Dorsolateral prefrontal cortex (tissue), 120 donors: ENCODE measurements at regions of chr1 and their contacts with region 1.

Region 1: GRCh38 chr1:198465201-198466144 is 75.0 kb downstream of the ATP6V1G3 start:
- DNase-seq: no peak
- H3K4me3 ChIP-seq: no peak overlapping the region
- H3K27ac ChIP-seq: no peak overlapping the region
- H3K27me3 ChIP-seq: no peaks in the 10 kb centered on the region
- CTCF ChIP-seq: peak; percentile 36 to 87 (median 71)

Region 2: GRCh38 chr1:197614916-197615692 is 850.4 kb before region 1 on chr1:
- intact Hi-C with region 1: loop called in 1 of 2 experiments (anchors 10 kb)
- DNase-seq: peak in 2 of 10 donors; percentile 7 to 17
- H3K4me3 ChIP-seq: no peak overlapping the region
- H3K27ac ChIP-seq: no peak overlapping the region
- H3K27me3 ChIP-seq: no peaks in the 10 kb centered on the region
- CTCF ChIP-seq: peak in 55 of 56 donors; percentile 32 to 75 (median 54)

Region 3: DNA sequence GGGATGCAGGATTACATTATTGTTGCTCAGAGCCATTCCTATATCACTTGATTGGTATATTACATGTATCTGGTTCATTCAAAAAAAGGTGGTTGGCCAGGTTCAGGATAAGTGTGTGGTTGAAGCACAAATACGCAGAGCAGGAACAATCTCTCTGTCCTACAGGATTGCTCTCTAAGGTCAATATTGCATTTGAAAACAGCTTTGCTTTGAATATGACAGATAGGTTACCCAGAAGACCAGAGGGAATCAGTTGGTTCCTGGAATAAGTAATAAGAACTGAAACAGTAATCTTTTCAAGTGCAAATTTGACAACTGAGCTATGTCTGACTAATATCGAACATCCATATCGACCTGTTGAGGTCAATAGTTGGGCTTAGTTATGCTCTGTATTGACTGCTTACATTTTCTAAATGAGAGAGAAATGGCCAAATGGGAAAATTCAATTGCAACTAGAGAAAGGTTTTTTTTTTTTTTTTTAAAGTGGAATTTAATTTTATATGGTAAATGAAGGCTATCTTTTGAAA is 101.8 kb before region 1 on chr1:
- intact Hi-C with region 1: no loop called
- DNase-seq: no peak
- H3K4me3 ChIP-seq: no peak overlapping the region
- H3K27ac ChIP-seq: no peak overlapping the region
- H3K27me3 ChIP-seq: peaks cover 0 to 4% (median 0%) of the 10 kb centered on the region in 45 donors
- CTCF ChIP-seq: no peak

Region 4: DNA sequence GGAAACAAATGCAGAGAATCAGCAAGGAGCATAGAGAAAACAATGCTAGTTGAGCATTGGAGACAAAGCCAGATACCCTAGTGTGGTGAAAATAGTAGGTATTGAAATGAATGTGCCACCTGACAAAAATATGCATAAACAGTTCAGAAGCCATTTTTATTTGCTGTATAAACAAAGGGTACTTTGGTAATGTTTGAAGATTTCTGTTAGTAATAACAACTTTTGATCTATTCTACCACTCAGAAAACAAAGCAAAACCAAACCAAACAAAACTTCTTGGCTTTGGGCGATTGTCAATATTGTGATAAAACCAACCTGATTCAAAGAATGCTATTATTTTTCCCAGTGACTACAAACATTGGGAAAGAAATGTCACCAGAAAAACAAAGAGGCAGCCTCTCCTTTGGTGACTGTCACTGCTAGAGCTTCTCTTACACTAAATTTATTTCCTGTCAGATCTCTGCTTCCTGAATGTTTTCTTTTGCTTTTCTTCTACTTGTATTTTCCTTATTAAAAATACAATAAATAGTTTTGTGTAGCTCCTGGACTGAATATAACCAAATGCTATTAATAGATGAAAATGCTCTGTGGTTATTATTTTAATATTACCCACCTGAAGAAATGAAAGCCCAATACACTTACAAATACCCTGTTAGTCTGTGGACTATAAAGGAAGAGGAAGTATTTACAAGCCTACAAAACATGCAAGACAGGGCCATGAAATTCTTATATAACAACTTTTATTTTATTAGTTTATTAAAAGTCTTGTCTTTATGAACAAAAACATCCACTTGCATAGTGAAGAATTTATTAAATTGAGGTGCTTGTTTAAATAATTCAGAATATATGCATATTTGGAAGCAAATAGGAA is 69.3 kb after region 1 on chr1:
- intact Hi-C with region 1: no loop called
- DNase-seq: no peak
- H3K4me3 ChIP-seq: no peak overlapping the region
- H3K27ac ChIP-seq: no peak overlapping the region
- H3K27me3 ChIP-seq: no peaks in the 10 kb centered on the region
- CTCF ChIP-seq: no peak